GM12878 (cell line): ENCODE measurements at regions of chr9 and their contacts with region 1.

Region 1: GRCh38 chr9:136118320-136119060 is at the start of gene TMEM250:
- DNase-seq: peak; percentile 92
- ATAC-seq: peak; percentile 87
- H3K4me3 ChIP-seq: peak within 1 kb of the TSS; percentile 92
- H3K27ac ChIP-seq: peak within 1 kb of the TSS; percentile 83
- H3K4me1 ChIP-seq: peaks cover 5% of the 10 kb centered on the region
- H3K27me3 ChIP-seq: no peaks in the 10 kb centered on the region; a peak in 1 of 4 replicates
- CTCF ChIP-seq: peak in 1 of 3 experiments; percentile 21; a peak in 2 of 6 replicates
- EP300 ChIP-seq: peak in 1 of 2 experiments; percentile 54; a peak in 1 of 4 replicates
- POLR2A ChIP-seq: no peak
- RAD21 ChIP-seq: no peak
- polyA plus RNA-seq, gene TMEM250: 0.39 to 1.2 TPM

Region 2: GRCh38 chr9:135602789-135603481 is 515.6 kb before region 1 on chr9:
- CTCF ChIA-PET with region 1: interaction called, 3 read pairs
- POLR2A ChIA-PET with region 1: no interaction called
- RAD21 ChIA-PET with region 1: no interaction called
- SMC1A ChIA-PET with region 1: no interaction called
- in situ Hi-C with region 1: no loop called
- intact Hi-C with region 1: loop called (anchors 10 kb)
- DNase-seq: no peak
- ATAC-seq: peak; percentile 78
- H3K4me3 ChIP-seq: no peak overlapping the region
- H3K27ac ChIP-seq: no peak overlapping the region
- H3K4me1 ChIP-seq: no peaks in the 10 kb centered on the region
- H3K27me3 ChIP-seq: no peaks in the 10 kb centered on the region; a peak in 1 of 4 replicates
- CTCF ChIP-seq: peak; percentile 59 to 71 (median 68)
- EP300 ChIP-seq: no peak
- POLR2A ChIP-seq: no peak
- RAD21 ChIP-seq: peak; percentile 33; the same call in 1 of the 2 replicates

Region 3: GRCh38 chr9:135864447-135865049 is 253.9 kb before region 1 on chr9:
- CTCF ChIA-PET with region 1: interaction called, 5 read pairs
- POLR2A ChIA-PET with region 1: no interaction called
- RAD21 ChIA-PET with region 1: no interaction called
- SMC1A ChIA-PET with region 1: no interaction called
- in situ Hi-C with region 1: loop called (anchors 5 kb)
- intact Hi-C with region 1: loop called (anchors 2 kb)
- DNase-seq: no peak
- ATAC-seq: peak; percentile 82
- H3K4me3 ChIP-seq: no peak overlapping the region
- H3K27ac ChIP-seq: no peak overlapping the region
- H3K4me1 ChIP-seq: no peaks in the 10 kb centered on the region
- H3K27me3 ChIP-seq: no peaks in the 10 kb centered on the region
- CTCF ChIP-seq: peak; percentile 76 to 86 (median 81)
- EP300 ChIP-seq: no peak
- POLR2A ChIP-seq: no peak
- RAD21 ChIP-seq: peak; percentile 64

Region 4: DNA sequence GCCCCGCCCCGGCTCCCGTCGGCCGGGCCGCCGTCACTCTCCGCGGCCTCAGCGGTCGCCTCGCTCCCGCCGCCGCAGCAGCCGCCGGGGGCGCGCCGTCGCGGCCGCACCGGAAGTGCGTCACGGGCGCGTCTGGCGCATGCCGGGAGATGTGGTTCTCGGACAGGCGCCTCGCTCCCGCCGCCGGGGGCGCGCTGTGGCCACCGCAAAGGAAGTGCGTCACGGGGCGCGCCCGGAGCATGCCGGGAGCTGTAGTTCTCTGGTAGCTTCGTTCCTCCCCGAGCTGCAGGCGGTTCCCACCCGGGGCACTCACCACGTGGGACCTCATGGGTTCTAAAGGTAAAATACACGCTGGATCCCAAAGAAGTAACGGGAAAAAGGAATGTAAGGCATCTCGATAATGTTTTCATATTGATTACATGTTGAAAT is 157.2 kb before region 1 on chr9 and contains the start of gene UBAC1:
- CTCF ChIA-PET with region 1: interaction called, 59 read pairs
- POLR2A ChIA-PET with region 1: interaction called, 5 read pairs
- RAD21 ChIA-PET with region 1: interaction called, 9 read pairs
- SMC1A ChIA-PET with region 1: interaction called, 6 read pairs
- in situ Hi-C with region 1: loop called (anchors 5 kb)
- intact Hi-C with region 1: no loop called
- DNase-seq: peak; percentile 63
- ATAC-seq: peak; percentile 93
- H3K4me3 ChIP-seq: peak within 1 kb of the TSS; percentile 92
- H3K27ac ChIP-seq: peak within 1 kb of the TSS; percentile 76
- H3K4me1 ChIP-seq: peaks cover 9% of the 10 kb centered on the region
- H3K27me3 ChIP-seq: no peaks in the 10 kb centered on the region; a peak in 1 of 4 replicates
- CTCF ChIP-seq: peak; percentile 11 to 27 (median 23); a peak in 4 of 6 replicates
- EP300 ChIP-seq: no peak
- POLR2A ChIP-seq: no peak
- RAD21 ChIP-seq: no peak
- polyA plus RNA-seq, gene UBAC1: 16.7 to 20.7 TPM

Region 5: GRCh38 chr9:135971892-135972291 is 146.6 kb before region 1 on chr9:
- CTCF ChIA-PET with region 1: interaction called, 59 read pairs
- POLR2A ChIA-PET with region 1: no interaction called
- RAD21 ChIA-PET with region 1: interaction called, 9 read pairs
- SMC1A ChIA-PET with region 1: interaction called, 7 read pairs
- in situ Hi-C with region 1: no loop called
- intact Hi-C with region 1: loop called (anchors 1 kb)
- DNase-seq: no peak
- ATAC-seq: peak; percentile 62
- H3K4me3 ChIP-seq: no peak overlapping the region
- H3K27ac ChIP-seq: no peak overlapping the region
- H3K4me1 ChIP-seq: no peaks in the 10 kb centered on the region
- H3K27me3 ChIP-seq: no peaks in the 10 kb centered on the region
- CTCF ChIP-seq: no peak
- EP300 ChIP-seq: no peak
- POLR2A ChIP-seq: no peak
- RAD21 ChIP-seq: no peak

Region 6: DNA sequence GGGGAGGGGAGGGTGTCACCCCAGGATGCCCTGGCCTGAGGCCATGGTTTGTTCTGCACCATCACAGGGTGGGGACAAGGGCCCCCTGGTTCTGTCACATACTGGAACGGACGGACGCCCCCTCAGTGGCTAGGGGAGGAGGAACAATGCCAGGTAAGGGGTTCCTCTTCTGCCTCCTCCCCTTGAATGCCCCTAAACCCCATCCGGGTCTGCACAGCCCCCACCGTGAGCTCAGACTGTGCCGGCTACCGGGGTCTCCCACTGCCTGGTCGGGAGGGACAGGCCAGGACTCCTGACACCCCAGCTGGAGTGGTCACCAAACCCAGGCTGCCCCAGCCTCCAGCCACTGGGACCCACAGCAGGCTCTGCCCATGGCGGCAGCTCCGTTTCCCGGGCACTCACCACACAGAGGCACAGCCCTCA is 57.5 kb before region 1 on chr9:
- CTCF ChIA-PET with region 1: no interaction called
- POLR2A ChIA-PET with region 1: no interaction called
- RAD21 ChIA-PET with region 1: no interaction called
- SMC1A ChIA-PET with region 1: no interaction called
- in situ Hi-C with region 1: no loop called
- intact Hi-C with region 1: no loop called
- DNase-seq: no peak
- ATAC-seq: no peak
- H3K4me3 ChIP-seq: no peak overlapping the region
- H3K27ac ChIP-seq: no peak overlapping the region
- H3K4me1 ChIP-seq: no peaks in the 10 kb centered on the region
- H3K27me3 ChIP-seq: no peaks in the 10 kb centered on the region
- CTCF ChIP-seq: no peak
- EP300 ChIP-seq: no peak
- POLR2A ChIP-seq: no peak
- RAD21 ChIP-seq: no peak

Region 7: DNA sequence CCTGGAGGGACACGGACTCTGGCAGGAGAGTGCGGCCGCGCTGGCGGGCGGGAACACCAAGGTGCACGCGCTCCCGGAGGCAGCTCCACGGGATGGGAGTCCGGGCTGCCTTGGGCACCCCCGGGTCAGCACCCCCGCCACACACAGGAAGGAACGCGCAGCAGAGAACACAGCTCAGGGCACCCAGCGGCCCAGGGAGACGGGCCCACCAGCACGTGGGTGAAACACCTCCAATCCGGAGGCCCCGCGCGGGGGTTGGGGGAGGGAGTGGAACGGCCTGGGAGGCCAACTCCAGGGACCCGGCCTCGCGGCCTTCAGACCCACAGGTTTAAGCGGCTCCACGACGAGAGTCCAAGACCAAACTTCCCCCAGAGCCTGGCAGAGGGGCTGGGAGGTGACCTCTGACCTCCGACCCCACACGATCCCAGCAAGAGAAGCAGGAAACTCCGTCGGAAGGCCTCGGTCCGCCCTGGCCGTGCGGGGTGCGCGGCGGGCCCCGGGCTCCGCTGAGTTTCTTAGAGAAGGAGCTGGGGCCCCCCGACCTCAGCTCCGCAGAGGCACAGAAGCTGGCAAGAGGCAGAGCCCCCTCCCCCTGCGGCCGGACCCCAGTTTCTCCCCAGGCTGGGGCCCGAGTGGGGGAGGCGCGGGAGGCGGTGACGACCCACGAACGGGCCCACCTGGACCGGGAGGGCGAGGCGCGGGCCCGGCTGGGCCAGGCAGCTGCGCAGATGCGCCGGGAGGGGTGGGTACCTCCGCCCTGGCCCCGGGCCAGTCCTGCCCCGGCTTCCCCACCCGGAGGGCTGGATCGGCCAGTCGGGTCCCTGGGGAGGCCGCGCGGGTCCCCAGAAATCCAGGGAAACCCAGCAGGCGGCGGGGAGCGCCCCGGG is 24.3 kb before region 1 on chr9:
- CTCF ChIA-PET with region 1: interaction called, 46 read pairs
- POLR2A ChIA-PET with region 1: interaction called, 8 read pairs
- RAD21 ChIA-PET with region 1: interaction called, 28 read pairs
- SMC1A ChIA-PET with region 1: interaction called, 15 read pairs
- in situ Hi-C with region 1: no loop called
- intact Hi-C with region 1: loop called (anchors 1 kb)
- DNase-seq: no peak
- ATAC-seq: peak; percentile 81
- H3K4me3 ChIP-seq: peak overlapping the region; percentile 63
- H3K27ac ChIP-seq: peak overlapping the region; percentile 61; the same call in 1 of the 2 replicates
- H3K4me1 ChIP-seq: peaks cover 6% of the 10 kb centered on the region
- H3K27me3 ChIP-seq: no peaks in the 10 kb centered on the region
- CTCF ChIP-seq: no peak
- EP300 ChIP-seq: no peak
- POLR2A ChIP-seq: peak; percentile 31; the same call in 1 of the 2 replicates
- RAD21 ChIP-seq: no peak